Activated CD4-positive, alpha-beta memory T cell treated with anti-CD3 and anti-CD28 coated beads, Interleukin-2, amount 10 ng/mL, durations not matched to agents 7 days and 5 days (primary cell): ENCODE measurements at regions of chr22 and their contacts with region 1.

Region 1: DNA sequence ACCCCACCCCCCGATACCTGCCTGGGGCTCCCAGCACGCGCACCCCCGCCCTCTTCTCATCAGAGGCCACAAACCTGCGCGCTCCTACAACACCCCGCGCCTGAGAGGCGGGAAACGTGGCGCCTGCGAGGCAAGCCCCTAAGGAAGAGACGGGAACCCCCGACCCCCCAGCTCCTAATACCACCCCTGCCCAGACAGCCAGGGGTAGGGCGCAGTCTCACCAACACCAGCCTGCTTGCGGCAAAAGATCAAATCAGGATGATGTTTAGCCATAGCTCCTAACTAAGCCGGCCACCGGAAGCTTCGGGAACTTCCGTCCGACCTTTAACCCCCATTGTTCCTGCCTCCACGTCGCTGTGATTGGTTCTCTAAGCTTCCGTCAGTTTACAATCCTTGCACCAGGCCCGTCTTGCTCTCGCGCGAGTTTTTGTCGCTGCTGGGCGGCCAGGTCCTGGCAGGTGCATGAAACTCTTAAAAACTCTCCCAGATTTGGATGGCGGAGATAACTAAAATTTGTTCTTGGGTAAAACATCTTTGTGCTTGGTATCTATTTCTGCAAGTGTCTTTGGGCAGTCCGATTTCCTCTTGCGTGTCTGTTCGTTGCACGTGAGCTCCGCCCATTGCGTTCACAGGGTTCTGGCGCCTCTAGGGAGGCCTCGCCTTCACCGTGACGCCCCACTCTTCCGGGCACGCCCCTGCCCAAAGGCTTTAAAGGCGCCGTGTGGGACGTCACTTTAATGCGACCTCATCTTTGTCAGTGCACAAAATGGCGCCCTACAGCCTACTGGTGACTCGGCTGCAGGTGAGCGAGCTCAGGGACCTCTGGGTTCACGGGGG is at the starts of genes ACO2 and PHF5A:
- DNase-seq: peak; percentile 98
- H3K4me3 Mint-ChIP-seq: peak within 1 kb of the TSS; percentile 77
- H3K27ac Mint-ChIP-seq: peak within 1 kb of the TSS; percentile 96
- H3K4me1 Mint-ChIP-seq: peaks cover 58% of the 10 kb centered on the region
- H3K27me3 Mint-ChIP-seq: no peaks in the 10 kb centered on the region
- total RNA-seq, gene ACO2: 69.9 to 72.2 TPM
- total RNA-seq, gene PHF5A: 43.9 to 55.3 TPM

Region 2: GRCh38 chr22:41285820-41286638 is 182.6 kb before region 1 on chr22 and contains the start of gene RANGAP1:
- CTCF ChIA-PET with region 1: interaction called, 3 read pairs
- POLR2A ChIA-PET with region 1: interaction called, 13 read pairs
- DNase-seq: peak; percentile 99
- H3K4me3 Mint-ChIP-seq: peak within 1 kb of the TSS; percentile 94
- H3K27ac Mint-ChIP-seq: peak within 1 kb of the TSS; percentile 99
- H3K4me1 Mint-ChIP-seq: peaks cover 41% of the 10 kb centered on the region
- H3K27me3 Mint-ChIP-seq: no peaks in the 10 kb centered on the region
- total RNA-seq, gene RANGAP1: 98.7 to 99.7 TPM

Region 3: DNA sequence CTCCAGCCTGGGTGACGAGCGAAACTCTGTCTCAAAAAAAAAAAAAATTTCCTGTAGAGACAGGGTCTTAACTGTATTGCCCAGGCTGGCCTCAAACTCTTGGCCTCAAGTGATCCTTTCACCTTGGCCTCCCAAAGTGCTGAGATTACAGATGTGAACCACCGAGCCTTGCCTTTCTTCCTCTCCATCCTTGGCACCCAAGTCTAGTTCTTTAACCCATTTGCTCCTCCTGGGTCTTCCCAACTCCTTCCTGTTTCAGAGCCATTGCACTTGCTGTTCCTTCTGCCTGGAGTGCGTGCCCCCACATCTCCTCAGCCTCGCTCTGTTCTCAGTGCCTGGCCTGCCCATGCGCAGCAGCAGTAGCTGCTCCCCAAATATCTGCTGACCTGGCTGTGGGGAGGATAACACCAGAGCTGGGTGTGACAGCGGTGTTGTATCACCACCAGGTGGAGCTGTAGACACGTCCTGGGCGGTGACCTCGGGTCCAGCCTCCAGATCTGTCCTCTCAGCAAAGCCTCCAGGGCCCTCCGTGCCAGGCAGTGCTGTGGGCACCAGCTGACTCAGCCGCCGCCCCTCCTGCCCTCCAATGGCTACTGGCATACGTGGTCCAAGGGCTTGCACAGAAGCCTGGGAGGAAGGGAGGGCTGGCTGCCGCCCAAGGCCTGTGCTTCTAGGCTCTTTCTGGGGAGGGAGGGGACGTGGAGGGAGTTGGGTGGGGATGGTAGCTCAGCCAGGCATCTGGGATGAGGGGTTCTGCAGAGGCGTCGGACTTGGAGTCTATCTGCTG is 64.9 kb before region 1 on chr22:
- CTCF ChIA-PET with region 1: interaction called, 20 read pairs
- POLR2A ChIA-PET with region 1: interaction called, 24 read pairs
- DNase-seq: peak; percentile 90
- H3K4me3 Mint-ChIP-seq: no peak overlapping the region
- H3K27ac Mint-ChIP-seq: no peak overlapping the region
- H3K4me1 Mint-ChIP-seq: peaks cover 10% of the 10 kb centered on the region
- H3K27me3 Mint-ChIP-seq: no peaks in the 10 kb centered on the region

Region 4: GRCh38 chr22:41425660-41426365 is 42.8 kb before region 1 on chr22:
- CTCF ChIA-PET with region 1: no interaction called
- POLR2A ChIA-PET with region 1: interaction called, 10 read pairs
- DNase-seq: peak; percentile 77
- H3K4me3 Mint-ChIP-seq: peak overlapping the region; percentile 14
- H3K27ac Mint-ChIP-seq: peak overlapping the region; percentile 82
- H3K4me1 Mint-ChIP-seq: peaks cover 14% of the 10 kb centered on the region
- H3K27me3 Mint-ChIP-seq: no peaks in the 10 kb centered on the region

Region 5: GRCh38 chr22:41458161-41458728 is 10.4 kb before region 1 on chr22:
- CTCF ChIA-PET with region 1: no interaction called
- POLR2A ChIA-PET with region 1: interaction called, 26 read pairs
- DNase-seq: no peak
- H3K4me3 Mint-ChIP-seq: no peak overlapping the region
- H3K27ac Mint-ChIP-seq: peak overlapping the region; percentile 32
- H3K4me1 Mint-ChIP-seq: peaks cover 10% of the 10 kb centered on the region
- H3K27me3 Mint-ChIP-seq: no peaks in the 10 kb centered on the region

Region 6: DNA sequence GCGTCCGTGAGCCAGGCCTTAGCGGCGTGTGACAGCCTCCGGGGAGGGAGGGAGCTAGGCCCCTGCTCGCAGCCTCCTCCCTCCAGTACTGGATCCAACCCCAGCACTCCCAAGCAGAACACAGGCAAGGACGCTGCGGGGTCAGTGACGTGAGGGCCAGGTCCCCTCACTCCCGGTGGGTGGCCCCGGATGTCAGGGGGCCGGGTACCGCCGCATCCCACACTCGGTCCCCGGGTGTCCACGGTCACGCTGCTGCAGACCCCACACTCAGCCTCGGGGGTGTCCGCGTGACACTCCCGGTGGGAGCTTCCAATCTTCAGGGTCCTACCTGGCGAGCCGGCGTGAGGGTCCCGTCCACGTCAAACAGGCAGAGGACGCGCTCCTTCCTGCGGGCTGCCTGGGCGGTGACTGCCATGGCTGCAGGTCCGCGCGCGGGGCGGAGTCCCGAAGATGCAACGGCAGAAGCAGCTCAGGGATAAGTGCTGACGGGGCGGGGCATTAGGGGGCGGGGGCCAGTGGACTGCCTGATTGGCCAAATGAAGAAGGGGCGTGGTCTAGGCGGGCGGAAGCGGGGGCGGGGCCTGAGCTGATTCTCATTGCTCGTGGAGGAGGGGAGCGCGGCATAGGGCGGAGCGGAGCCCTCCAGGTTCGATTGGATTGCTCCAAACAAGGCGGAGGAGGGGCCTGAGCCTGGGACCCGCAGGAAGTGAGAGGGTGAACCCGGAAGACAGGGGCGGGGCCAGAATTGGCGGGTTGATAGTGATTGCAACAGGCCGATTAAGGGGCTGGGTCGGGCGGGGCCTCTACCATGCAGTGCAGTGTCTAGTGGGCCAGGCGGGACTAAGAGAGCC is 121.0 kb after region 1 on chr22 and contains the start of gene PMM1:
- CTCF ChIA-PET with region 1: no interaction called
- POLR2A ChIA-PET with region 1: interaction called, 19 read pairs
- DNase-seq: peak; percentile 100
- H3K4me3 Mint-ChIP-seq: peak within 1 kb of the TSS; percentile 96
- H3K27ac Mint-ChIP-seq: peak within 1 kb of the TSS; percentile 87
- H3K4me1 Mint-ChIP-seq: peaks cover 26% of the 10 kb centered on the region
- H3K27me3 Mint-ChIP-seq: no peaks in the 10 kb centered on the region
- total RNA-seq, gene PMM1: 44.4 to 46.2 TPM